ENCODE measurements at regions of chr1 and their contacts with region 1.

Region 1: GRCh38 chr1:198246337-198246736 is 89.5 kb downstream of the NEK7 start:
- DNase-seq: no peak
- H3K4me3 ChIP-seq: no peak overlapping the region
- CTCF ChIP-seq: no peak
- POLR2A ChIP-seq: no peak

Region 2: GRCh38 chr1:198107041-198107440 is 139.3 kb before region 1 on chr1:
- intact Hi-C with region 1: no loop called
- DNase-seq: no peak
- H3K4me3 ChIP-seq: no peak overlapping the region
- CTCF ChIP-seq: no peak
- POLR2A ChIP-seq: no peak

Region 3: GRCh38 chr1:198175423-198176170 is 70.7 kb before region 1 on chr1:
- intact Hi-C with region 1: loop called (anchors 10 kb)
- DNase-seq: no peak
- H3K4me3 ChIP-seq: no peak overlapping the region
- CTCF ChIP-seq: no peak
- POLR2A ChIP-seq: no peak